T-cell (primary cell): ENCODE measurements at regions of chr15 and their contacts with region 1.

Region 1: GRCh38 chr15:48861813-48862431 is 16.0 kb upstream of the EID1 start:
- DNase-seq: peak in 27 of 35 experiments; percentile 4 to 80 (median 29)
- ATAC-seq: peak in 3 of 4 experiments; percentile 55 to 71 (median 58)
- H3K4me3 ChIP-seq: no peak overlapping the region
- H3K4me3 Mint-ChIP-seq: no peak overlapping the region
- H3K27ac ChIP-seq: no peak overlapping the region
- H3K27ac Mint-ChIP-seq: no peak overlapping the region
- H3K4me1 ChIP-seq: no peaks in the 10 kb centered on the region
- H3K4me1 Mint-ChIP-seq: peaks cover 0 to 1% (median 0%) of the 10 kb centered on the region in 3 donors
- H3K27me3 ChIP-seq: no peaks in the 10 kb centered on the region
- H3K27me3 Mint-ChIP-seq: peaks cover 10 to 17% of the 10 kb centered on the region in 2 donors

Region 2: DNA sequence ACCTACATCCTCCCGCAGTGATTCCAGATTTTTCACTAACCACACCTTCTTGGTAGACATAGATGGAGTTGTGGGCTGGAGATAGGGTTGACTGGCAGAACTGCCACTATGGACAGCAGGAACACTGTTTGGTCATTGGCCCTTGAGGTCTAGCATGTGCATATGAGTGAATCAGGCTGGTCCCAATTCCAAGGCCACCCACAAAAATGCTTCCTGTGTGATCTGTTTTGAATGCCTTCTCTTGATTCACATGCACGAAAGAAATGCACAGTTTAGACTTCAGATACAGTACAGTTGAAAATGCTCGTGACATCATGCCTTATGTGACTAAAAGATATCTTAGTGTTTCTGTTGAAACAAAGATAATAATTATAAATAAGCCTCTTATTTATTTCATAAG is 1430.4 kb before region 1 on chr15:
- CTCF ChIA-PET with region 1: no interaction called
- POLR2A ChIA-PET with region 1: no interaction called
- DNase-seq: no peak
- ATAC-seq: no peak
- H3K4me3 ChIP-seq: no peak overlapping the region
- H3K4me3 Mint-ChIP-seq: no peak overlapping the region
- H3K27ac ChIP-seq: no peak overlapping the region
- H3K27ac Mint-ChIP-seq: no peak overlapping the region
- H3K4me1 ChIP-seq: no peaks in the 10 kb centered on the region
- H3K4me1 Mint-ChIP-seq: no peaks in the 10 kb centered on the region
- H3K27me3 ChIP-seq: no peaks in the 10 kb centered on the region
- H3K27me3 Mint-ChIP-seq: peaks cover 0 to 7% of the 10 kb centered on the region in 2 donors

Region 3: DNA sequence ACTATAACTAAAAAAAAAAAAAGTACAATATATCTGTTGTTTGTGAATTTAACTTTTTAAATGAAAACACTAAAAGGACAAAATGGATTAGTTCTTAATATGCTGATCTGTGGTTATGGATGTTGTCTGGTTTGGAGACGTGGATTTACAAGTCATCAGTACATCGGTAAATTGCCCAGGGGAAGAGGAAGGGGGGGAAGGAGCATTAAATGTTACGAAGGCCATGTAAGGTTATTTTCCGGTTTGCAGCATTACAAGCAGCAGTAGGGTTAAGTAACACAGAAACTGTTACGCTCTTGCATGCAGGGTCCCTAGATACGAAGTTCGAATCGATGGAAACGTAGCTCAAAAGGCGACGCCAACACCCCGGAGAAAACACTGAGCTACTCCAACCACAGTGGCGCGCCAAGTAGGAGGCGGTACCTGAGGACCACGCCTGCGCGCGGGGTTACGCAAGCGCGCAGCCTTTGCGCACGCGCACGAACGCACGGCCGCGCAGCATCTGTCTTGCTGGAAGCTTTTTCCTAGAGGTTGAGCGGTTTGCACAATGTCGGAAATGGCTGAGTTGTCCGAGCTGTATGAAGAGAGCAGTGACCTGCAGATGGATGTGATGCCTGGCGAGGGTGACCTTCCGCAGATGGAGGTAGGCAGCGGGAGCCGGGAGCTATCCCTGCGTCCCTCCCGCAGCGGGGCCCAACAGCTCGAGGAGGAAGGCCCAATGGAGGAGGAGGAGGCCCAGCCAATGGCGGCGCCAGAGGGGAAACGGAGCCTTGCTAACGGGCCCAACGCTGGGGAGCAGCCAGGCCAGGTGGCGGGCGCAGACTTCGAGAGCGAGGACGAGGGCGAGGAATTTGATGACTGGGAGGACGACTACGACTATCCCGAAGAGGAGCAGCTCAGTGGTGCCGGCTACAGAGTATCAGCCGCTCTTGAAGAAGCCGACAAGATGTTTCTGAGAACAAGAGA is 16.0 kb after region 1 on chr15 and contains the start of gene EID1:
- CTCF ChIA-PET with region 1: interaction called, 3 to 34 read pairs
- POLR2A ChIA-PET with region 1: interaction called in 1 of 2 experiments, 3 read pairs
- DNase-seq: peak; percentile 82 to 97 (median 90)
- ATAC-seq: peak; percentile 93 to 98 (median 95)
- H3K4me3 ChIP-seq: peak within 1 kb of the TSS; percentile 65 to 84
- H3K4me3 Mint-ChIP-seq: peak within 1 kb of the TSS; percentile 96 to 99 (median 97)
- H3K27ac ChIP-seq: peak within 1 kb of the TSS; percentile 83
- H3K27ac Mint-ChIP-seq: peak within 1 kb of the TSS; percentile 97 to 98
- H3K4me1 ChIP-seq: peaks cover 7 to 13% of the 10 kb centered on the region in 2 experiments
- H3K4me1 Mint-ChIP-seq: peaks cover 20 to 31% (median 29%) of the 10 kb centered on the region in 3 donors
- H3K27me3 ChIP-seq: peaks cover 0 to 4% of the 10 kb centered on the region in 2 experiments
- H3K27me3 Mint-ChIP-seq: peaks cover 12 to 14% of the 10 kb centered on the region in 2 donors
- total RNA-seq, gene EID1: 43.4 to 82.0 (median 74.4) TPM

Region 4: GRCh38 chr15:49046220-49047102 is 184.5 kb after region 1 on chr15 and contains the start of gene SECISBP2L:
- CTCF ChIA-PET with region 1: interaction called in 1 of 2 experiments, 10 read pairs
- POLR2A ChIA-PET with region 1: no interaction called
- DNase-seq: peak; percentile 71 to 93 (median 87)
- ATAC-seq: peak; percentile 91 to 95 (median 92)
- H3K4me3 ChIP-seq: peak within 1 kb of the TSS; percentile 94 to 96
- H3K4me3 Mint-ChIP-seq: peak within 1 kb of the TSS; percentile 94 to 97 (median 96)
- H3K27ac ChIP-seq: peak within 1 kb of the TSS; percentile 57
- H3K27ac Mint-ChIP-seq: peak within 1 kb of the TSS; percentile 86 to 91
- H3K4me1 ChIP-seq: peaks cover 13 to 18% of the 10 kb centered on the region in 2 experiments
- H3K4me1 Mint-ChIP-seq: peaks cover 34 to 46% (median 38%) of the 10 kb centered on the region in 3 donors
- H3K27me3 ChIP-seq: no peaks in the 10 kb centered on the region
- H3K27me3 Mint-ChIP-seq: no peaks in the 10 kb centered on the region
- total RNA-seq, gene SECISBP2L: 46.8 to 62.5 (median 48.7) TPM

Region 5: DNA sequence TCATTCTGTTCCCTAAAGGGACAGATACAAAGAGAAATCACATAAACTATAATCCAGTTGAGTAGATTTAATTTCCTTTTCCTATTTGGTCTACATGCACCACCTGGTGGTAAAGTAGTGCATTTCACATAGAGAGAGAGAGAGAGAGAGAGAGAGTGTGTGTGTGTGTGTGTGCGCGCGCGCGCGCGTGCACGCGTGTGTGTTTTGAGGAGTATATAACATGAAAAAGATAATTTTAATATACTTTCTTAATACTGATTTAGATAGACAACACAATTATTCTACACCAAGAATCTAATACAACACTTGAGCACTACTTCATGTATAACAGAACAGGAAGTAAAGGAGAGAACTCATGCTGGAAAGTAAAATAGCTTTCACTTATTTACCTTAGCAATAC is 560.1 kb after region 1 on chr15:
- CTCF ChIA-PET with region 1: interaction called, 3 to 40 read pairs
- POLR2A ChIA-PET with region 1: no interaction called
- DNase-seq: peak in 27 of 35 experiments; percentile 1 to 62 (median 15)
- ATAC-seq: peak in 3 of 4 experiments; percentile 38 to 56 (median 43)
- H3K4me3 ChIP-seq: no peak overlapping the region
- H3K4me3 Mint-ChIP-seq: peak overlapping the region in 2 of 3 donors; percentile 10 to 34
- H3K27ac ChIP-seq: no peak overlapping the region
- H3K27ac Mint-ChIP-seq: peak overlapping the region in 1 of 2 donors; percentile 40
- H3K4me1 ChIP-seq: no peaks in the 10 kb centered on the region
- H3K4me1 Mint-ChIP-seq: peaks cover 3 to 7% (median 5%) of the 10 kb centered on the region in 3 donors
- H3K27me3 ChIP-seq: peaks cover 0 to 2% of the 10 kb centered on the region in 2 experiments
- H3K27me3 Mint-ChIP-seq: peaks cover 0 to 3% of the 10 kb centered on the region in 2 donors

Region 6: DNA sequence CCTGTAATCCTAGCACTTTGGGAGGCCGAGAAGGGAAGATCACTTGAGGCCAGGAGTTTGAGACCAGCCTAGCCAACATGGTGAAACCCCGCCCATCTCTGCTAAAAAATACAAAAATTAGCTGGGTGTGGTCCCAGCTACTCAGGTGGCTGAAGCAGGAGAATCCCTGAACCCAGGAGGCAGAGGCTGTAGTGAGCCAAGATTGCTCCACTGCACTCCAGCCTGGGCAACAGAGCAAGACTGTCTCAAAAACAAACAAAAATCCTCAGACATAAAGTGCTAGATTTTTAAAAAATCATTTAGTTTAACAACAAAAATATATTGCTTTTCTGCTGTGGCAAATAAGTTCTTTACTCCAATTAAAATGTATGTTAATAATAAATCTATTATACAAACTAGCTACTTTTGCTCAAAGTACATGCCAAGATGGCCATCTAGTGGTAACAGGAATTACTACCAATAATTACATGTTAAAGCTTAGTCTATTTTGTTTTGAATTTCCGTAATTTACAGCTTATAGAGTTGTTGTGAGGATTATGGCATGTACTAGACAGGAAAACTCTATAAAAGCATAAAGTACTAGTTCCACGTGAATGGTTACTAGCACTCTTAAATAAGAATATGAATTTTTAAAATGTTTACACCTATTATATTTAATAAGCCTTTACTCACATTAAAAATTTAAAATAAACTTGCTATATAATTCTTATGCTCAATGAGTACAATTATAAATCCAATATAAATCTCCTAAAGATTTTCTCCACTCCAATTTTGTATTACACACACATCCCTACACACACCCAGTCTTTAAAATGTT is 1454.1 kb after region 1 on chr15:
- CTCF ChIA-PET with region 1: interaction called in 1 of 2 experiments, 13 read pairs
- POLR2A ChIA-PET with region 1: no interaction called
- DNase-seq: peak in 2 of 35 experiments; percentile 5 to 68
- ATAC-seq: peak in 2 of 4 experiments; percentile 48 to 52
- H3K4me3 ChIP-seq: no peak overlapping the region
- H3K4me3 Mint-ChIP-seq: no peak overlapping the region
- H3K27ac ChIP-seq: no peak overlapping the region
- H3K27ac Mint-ChIP-seq: no peak overlapping the region
- H3K4me1 ChIP-seq: peaks cover 0 to 7% of the 10 kb centered on the region in 2 experiments
- H3K4me1 Mint-ChIP-seq: peaks cover 14 to 21% (median 16%) of the 10 kb centered on the region in 3 donors
- H3K27me3 ChIP-seq: no peaks in the 10 kb centered on the region
- H3K27me3 Mint-ChIP-seq: no peaks in the 10 kb centered on the region